Naive thymus-derived CD4-positive, alpha-beta T cell (primary cell): ENCODE measurements at regions of chr18 and their contacts with region 1.

Region 1: DNA sequence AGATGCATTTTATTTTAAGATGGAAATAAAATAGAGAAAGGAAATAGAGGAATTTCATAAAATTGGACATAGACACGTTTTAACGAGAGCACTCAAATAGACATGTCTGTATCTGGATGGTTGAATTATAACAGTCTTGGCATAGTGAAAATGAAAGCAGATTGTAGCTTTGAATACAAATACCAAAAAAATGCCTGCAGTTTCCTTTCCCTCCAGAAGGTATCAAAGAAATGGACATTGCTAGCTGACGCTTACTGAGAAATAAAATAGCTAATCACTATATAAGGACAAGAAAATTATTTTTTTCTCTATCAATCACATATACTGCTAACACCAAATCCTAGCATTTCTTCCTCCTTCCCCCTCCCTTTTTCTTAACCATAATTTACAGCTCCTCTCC is 11.4 kb upstream of the MAPRE2 start:
- DNase-seq: peak in 7 of 9 donors; percentile 34 to 58 (median 55)
- ATAC-seq: peak; percentile 65
- H3K4me3 ChIP-seq: peak overlapping the region; percentile 41
- H3K4me3 Mint-ChIP-seq: peak overlapping the region; percentile 78 to 93 (median 88)
- H3K27ac ChIP-seq: peak overlapping the region; percentile 79
- H3K27ac Mint-ChIP-seq: peak overlapping the region; percentile 89 to 98 (median 96)
- H3K4me1 ChIP-seq: peaks cover 34 to 53% of the 10 kb centered on the region in 2 donors
- H3K4me1 Mint-ChIP-seq: peaks cover 34 to 75% (median 69%) of the 10 kb centered on the region in 7 donors
- H3K27me3 ChIP-seq: no peaks in the 10 kb centered on the region
- H3K27me3 Mint-ChIP-seq: no peaks in the 10 kb centered on the region

Region 2: DNA sequence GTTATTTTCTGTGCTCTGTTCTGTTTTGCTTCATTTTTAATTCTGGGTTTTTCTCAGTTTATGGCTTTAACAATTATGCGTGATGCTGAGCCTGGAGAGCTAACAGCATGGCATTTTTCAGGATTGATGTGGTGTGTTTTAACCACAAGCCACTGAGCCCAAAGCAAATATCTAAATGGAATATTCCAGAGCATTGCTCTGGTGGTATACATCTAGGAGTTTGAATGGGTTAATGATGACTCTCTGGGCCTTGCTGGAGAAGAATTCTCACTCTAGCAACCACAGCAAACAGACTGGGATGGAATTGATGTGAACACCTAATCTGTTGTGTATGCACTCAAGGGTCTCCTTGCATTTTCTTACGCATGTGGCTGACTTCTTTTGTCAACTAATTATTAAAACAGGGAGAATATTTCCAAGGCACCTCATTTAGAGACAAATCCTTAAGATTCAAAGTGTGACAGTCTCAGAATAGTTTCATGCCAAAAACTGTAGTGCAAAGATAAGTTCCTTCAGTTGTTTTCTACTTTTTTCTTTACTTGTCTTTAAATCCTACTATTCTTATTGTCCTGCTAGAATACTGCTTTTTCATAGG is 155.7 kb before region 1 on chr18:
- CTCF ChIA-PET with region 1: no interaction called
- POLR2A ChIA-PET with region 1: no interaction called
- intact Hi-C with region 1: no loop called
- DNase-seq: no peak
- ATAC-seq: no peak
- H3K4me3 ChIP-seq: no peak overlapping the region
- H3K4me3 Mint-ChIP-seq: no peak overlapping the region
- H3K27ac ChIP-seq: no peak overlapping the region
- H3K27ac Mint-ChIP-seq: no peak overlapping the region
- H3K4me1 ChIP-seq: no peaks in the 10 kb centered on the region
- H3K4me1 Mint-ChIP-seq: peaks cover 0 to 6% (median 0%) of the 10 kb centered on the region in 7 donors
- H3K27me3 ChIP-seq: no peaks in the 10 kb centered on the region
- H3K27me3 Mint-ChIP-seq: no peaks in the 10 kb centered on the region

Region 3: GRCh38 chr18:35005963-35006577 is 23.7 kb before region 1 on chr18:
- CTCF ChIA-PET with region 1: interaction called, 7 read pairs
- POLR2A ChIA-PET with region 1: interaction called, 4 read pairs
- intact Hi-C with region 1: loop called in 1 of 2 experiments (anchors 1 kb)
- DNase-seq: peak in 7 of 9 donors; percentile 29 to 66 (median 54)
- ATAC-seq: peak; percentile 80
- H3K4me3 ChIP-seq: no peak overlapping the region
- H3K4me3 Mint-ChIP-seq: no peak overlapping the region
- H3K27ac ChIP-seq: no peak overlapping the region
- H3K27ac Mint-ChIP-seq: no peak overlapping the region
- H3K4me1 ChIP-seq: no peaks in the 10 kb centered on the region
- H3K4me1 Mint-ChIP-seq: no peaks in the 10 kb centered on the region
- H3K27me3 ChIP-seq: no peaks in the 10 kb centered on the region
- H3K27me3 Mint-ChIP-seq: no peaks in the 10 kb centered on the region

Region 4: GRCh38 chr18:35143622-35144596 is 114.1 kb after region 1 on chr18:
- CTCF ChIA-PET with region 1: interaction called, 75 read pairs
- POLR2A ChIA-PET with region 1: interaction called, 7 read pairs
- intact Hi-C with region 1: loop called (anchors 1 kb)
- DNase-seq: peak in 6 of 9 donors; percentile 16 to 46 (median 42)
- ATAC-seq: peak; percentile 80
- H3K4me3 ChIP-seq: no peak overlapping the region
- H3K4me3 Mint-ChIP-seq: no peak overlapping the region
- H3K27ac ChIP-seq: no peak overlapping the region
- H3K27ac Mint-ChIP-seq: peak overlapping the region in 7 of 9 donors; percentile 4 to 65 (median 53)
- H3K4me1 ChIP-seq: no peaks in the 10 kb centered on the region
- H3K4me1 Mint-ChIP-seq: peaks cover 0 to 14% (median 6%) of the 10 kb centered on the region in 7 donors
- H3K27me3 ChIP-seq: no peaks in the 10 kb centered on the region
- H3K27me3 Mint-ChIP-seq: no peaks in the 10 kb centered on the region

Region 5: DNA sequence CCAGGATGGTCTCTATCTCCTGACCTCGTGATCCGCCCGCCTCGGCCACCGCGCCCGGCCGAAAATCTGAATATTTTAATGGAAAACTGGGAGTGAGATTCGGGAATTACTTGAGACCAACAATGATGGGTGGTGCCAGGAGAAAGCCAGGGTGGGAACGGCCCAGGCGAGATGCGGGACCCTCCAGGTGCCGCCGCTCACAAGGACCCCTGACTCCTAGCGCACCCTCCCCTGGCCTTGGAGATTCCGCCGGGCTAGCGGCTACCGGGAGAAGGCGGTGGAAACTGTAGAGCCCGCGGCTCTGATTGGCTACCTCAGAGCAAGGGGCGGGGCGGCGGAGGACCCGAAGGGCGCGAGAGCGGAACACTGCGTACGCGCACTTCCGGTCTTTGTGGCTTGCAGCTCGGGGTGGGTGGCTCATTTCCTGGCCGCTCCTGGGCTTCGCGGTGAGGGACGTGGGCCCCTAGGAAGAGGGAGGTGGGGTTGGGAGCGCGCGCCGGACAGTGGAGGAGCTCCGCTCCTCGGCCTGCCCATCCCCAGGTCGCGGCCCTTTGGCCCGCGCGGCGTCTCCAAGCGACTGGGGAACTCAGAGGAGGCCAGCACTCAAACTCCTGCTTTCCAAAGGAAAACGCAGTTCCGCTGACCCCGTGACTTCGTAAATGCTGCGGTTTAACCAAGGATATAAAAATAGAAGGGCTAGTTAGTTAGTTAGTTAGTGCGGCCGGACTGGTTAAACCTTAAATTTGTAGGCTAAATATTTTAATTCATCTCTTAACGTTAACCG is 211.1 kb after region 1 on chr18 and contains the start of gene ZNF397:
- CTCF ChIA-PET with region 1: no interaction called
- POLR2A ChIA-PET with region 1: interaction called, 5 read pairs
- intact Hi-C with region 1: loop called (anchors 1 to 2 kb)
- DNase-seq: peak; percentile 87 to 96 (median 91)
- ATAC-seq: peak; percentile 99
- H3K4me3 ChIP-seq: peak within 1 kb of the TSS; percentile 94
- H3K4me3 Mint-ChIP-seq: peak within 1 kb of the TSS; percentile 88 to 98 (median 96)
- H3K27ac ChIP-seq: peak within 1 kb of the TSS; percentile 97
- H3K27ac Mint-ChIP-seq: peak within 1 kb of the TSS; percentile 90 to 99 (median 98)
- H3K4me1 ChIP-seq: peaks cover 9 to 17% of the 10 kb centered on the region in 2 donors
- H3K4me1 Mint-ChIP-seq: peaks cover 16 to 41% (median 31%) of the 10 kb centered on the region in 7 donors
- H3K27me3 ChIP-seq: no peaks in the 10 kb centered on the region
- H3K27me3 Mint-ChIP-seq: no peaks in the 10 kb centered on the region
- total RNA-seq, gene ZNF397: 12.1 to 59.1 (median 27.6) TPM

Region 6: DNA sequence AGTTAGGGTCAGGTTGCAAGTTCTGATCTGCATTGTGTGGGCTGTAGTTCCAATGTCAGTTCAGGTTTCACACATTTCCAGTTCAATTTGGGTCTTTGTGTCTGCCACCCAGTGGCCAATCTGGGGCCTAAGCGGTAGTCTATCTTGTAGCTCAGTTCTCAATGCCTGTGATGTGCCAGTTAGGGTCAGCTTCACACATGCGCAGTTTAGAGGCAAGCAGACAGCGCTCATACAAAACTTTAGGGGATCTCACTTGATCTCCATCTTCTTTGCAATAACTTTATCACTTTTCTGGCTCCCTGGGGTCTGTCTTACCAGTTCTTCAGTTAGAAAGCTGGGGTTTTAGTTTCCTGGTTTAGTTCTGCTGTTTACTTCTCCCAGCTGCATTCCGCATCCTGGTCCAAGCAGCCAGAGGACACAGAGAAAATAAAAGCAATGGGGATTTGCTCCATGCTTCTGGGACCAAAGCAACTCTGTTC is 325.4 kb after region 1 on chr18:
- CTCF ChIA-PET with region 1: interaction called, 11 read pairs
- POLR2A ChIA-PET with region 1: no interaction called
- intact Hi-C with region 1: loop called (anchors 1 kb)
- DNase-seq: peak; percentile 16 to 67 (median 49)
- ATAC-seq: peak; percentile 98
- H3K4me3 ChIP-seq: no peak overlapping the region
- H3K4me3 Mint-ChIP-seq: no peak overlapping the region
- H3K27ac ChIP-seq: no peak overlapping the region
- H3K27ac Mint-ChIP-seq: peak overlapping the region in 1 of 9 donors; percentile 21
- H3K4me1 ChIP-seq: no peaks in the 10 kb centered on the region
- H3K4me1 Mint-ChIP-seq: peaks cover 0 to 7% (median 0%) of the 10 kb centered on the region in 7 donors
- H3K27me3 ChIP-seq: no peaks in the 10 kb centered on the region
- H3K27me3 Mint-ChIP-seq: peaks cover 0 to under 1% (median 0%) of the 10 kb centered on the region in 5 donors

Region 7: DNA sequence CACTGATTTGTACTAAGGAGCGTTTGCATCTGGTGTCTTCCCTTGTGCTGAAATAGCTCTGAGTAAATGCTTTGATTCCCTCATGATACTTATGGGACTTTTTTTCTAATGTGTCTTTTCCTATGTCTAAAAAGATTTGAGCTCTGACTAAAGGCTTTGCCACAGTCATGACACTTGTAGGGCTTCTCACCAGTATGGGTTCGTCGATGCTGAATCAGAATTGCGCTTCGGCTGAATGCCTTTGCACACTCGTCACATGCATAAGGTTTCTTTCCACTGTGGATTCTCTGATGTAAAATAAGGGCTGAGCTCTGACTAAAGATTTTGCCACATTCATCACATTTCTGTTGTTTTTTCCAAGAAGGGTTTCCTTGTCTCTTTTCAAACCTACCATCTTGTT is 339.4 kb after region 1 on chr18:
- CTCF ChIA-PET with region 1: no interaction called
- POLR2A ChIA-PET with region 1: no interaction called
- intact Hi-C with region 1: no loop called
- DNase-seq: no peak
- ATAC-seq: no peak
- H3K4me3 ChIP-seq: no peak overlapping the region
- H3K4me3 Mint-ChIP-seq: no peak overlapping the region
- H3K27ac ChIP-seq: no peak overlapping the region
- H3K27ac Mint-ChIP-seq: no peak overlapping the region
- H3K4me1 ChIP-seq: no peaks in the 10 kb centered on the region
- H3K4me1 Mint-ChIP-seq: peaks cover 0 to 4% (median 0%) of the 10 kb centered on the region in 7 donors
- H3K27me3 ChIP-seq: no peaks in the 10 kb centered on the region
- H3K27me3 Mint-ChIP-seq: peaks cover 0 to 11% (median 3%) of the 10 kb centered on the region in 5 donors

Region 8: DNA sequence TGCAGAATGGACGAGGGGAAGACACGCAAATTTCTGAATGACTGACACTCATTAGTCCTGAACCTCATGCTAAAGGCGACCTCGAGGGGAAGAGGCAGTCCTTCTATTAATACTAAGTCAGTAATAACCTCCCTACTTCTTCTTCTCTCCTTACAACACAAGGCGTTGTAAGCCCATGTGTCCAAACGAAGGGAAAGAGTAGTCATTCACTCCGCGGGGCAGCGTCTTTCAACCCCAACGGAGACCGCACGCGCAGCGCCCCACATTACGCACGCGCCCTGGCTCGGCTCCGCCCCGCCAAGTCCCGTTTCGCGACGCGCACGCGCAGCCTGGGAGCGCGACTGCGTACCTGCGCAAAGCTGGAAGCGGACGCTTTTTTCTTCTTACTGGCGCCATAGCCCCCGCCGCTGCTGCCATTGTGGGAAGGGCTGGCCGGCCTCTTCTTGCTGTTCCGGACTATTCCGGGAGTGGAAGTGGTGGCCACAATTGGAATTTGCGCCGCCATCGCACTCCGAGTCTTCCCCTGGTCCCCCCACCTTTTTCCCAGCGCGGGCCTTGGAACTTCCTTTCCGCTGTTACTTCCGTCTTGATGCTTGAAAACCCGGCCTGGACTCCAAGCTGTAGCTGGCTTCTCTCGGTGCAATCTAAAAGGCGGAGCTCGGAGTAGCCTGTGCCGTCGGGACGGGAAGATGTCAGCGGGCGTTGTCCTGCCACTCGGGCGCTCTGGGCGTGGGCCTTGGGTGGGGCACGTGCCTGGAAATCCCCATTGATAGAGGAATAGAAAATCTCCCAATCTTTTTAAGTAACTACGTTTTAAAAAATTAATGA is 467.8 kb after region 1 on chr18 and contains the start of gene INO80C:
- CTCF ChIA-PET with region 1: interaction called, 3 read pairs
- POLR2A ChIA-PET with region 1: interaction called, 9 read pairs
- intact Hi-C with region 1: loop called in 1 of 2 experiments (anchors 5 kb)
- DNase-seq: peak; percentile 87 to 94 (median 92)
- ATAC-seq: peak; percentile 93
- H3K4me3 ChIP-seq: peak within 1 kb of the TSS; percentile 96
- H3K4me3 Mint-ChIP-seq: peak within 1 kb of the TSS; percentile 84 to 100 (median 96)
- H3K27ac ChIP-seq: peak within 1 kb of the TSS; percentile 94
- H3K27ac Mint-ChIP-seq: peak within 1 kb of the TSS; percentile 96 to 100 (median 100)
- H3K4me1 ChIP-seq: peaks cover 9 to 12% of the 10 kb centered on the region in 2 donors
- H3K4me1 Mint-ChIP-seq: peaks cover 22 to 62% (median 51%) of the 10 kb centered on the region in 7 donors
- H3K27me3 ChIP-seq: no peaks in the 10 kb centered on the region
- H3K27me3 Mint-ChIP-seq: no peaks in the 10 kb centered on the region
- total RNA-seq, gene INO80C: 20.6 to 26.8 (median 25.7) TPM